Activated CD4-positive, alpha-beta T cell treated with anti-CD3 and anti-CD28 coated beads for 36 hours (primary cell): ENCODE measurements at regions of chr9 and their contacts with region 1.

Region 1: DNA sequence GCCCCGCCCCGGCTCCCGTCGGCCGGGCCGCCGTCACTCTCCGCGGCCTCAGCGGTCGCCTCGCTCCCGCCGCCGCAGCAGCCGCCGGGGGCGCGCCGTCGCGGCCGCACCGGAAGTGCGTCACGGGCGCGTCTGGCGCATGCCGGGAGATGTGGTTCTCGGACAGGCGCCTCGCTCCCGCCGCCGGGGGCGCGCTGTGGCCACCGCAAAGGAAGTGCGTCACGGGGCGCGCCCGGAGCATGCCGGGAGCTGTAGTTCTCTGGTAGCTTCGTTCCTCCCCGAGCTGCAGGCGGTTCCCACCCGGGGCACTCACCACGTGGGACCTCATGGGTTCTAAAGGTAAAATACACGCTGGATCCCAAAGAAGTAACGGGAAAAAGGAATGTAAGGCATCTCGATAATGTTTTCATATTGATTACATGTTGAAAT is at the start of gene UBAC1:
- DNase-seq: peak; percentile 98
- ATAC-seq: peak; percentile 92
- H3K4me3 Mint-ChIP-seq: peak within 1 kb of the TSS; percentile 87
- H3K27ac Mint-ChIP-seq: peak within 1 kb of the TSS; percentile 73
- H3K4me1 Mint-ChIP-seq: peaks cover 32% of the 10 kb centered on the region
- H3K27me3 Mint-ChIP-seq: no peaks in the 10 kb centered on the region
- total RNA-seq, gene UBAC1: 41.7 to 42.8 TPM

Region 2: DNA sequence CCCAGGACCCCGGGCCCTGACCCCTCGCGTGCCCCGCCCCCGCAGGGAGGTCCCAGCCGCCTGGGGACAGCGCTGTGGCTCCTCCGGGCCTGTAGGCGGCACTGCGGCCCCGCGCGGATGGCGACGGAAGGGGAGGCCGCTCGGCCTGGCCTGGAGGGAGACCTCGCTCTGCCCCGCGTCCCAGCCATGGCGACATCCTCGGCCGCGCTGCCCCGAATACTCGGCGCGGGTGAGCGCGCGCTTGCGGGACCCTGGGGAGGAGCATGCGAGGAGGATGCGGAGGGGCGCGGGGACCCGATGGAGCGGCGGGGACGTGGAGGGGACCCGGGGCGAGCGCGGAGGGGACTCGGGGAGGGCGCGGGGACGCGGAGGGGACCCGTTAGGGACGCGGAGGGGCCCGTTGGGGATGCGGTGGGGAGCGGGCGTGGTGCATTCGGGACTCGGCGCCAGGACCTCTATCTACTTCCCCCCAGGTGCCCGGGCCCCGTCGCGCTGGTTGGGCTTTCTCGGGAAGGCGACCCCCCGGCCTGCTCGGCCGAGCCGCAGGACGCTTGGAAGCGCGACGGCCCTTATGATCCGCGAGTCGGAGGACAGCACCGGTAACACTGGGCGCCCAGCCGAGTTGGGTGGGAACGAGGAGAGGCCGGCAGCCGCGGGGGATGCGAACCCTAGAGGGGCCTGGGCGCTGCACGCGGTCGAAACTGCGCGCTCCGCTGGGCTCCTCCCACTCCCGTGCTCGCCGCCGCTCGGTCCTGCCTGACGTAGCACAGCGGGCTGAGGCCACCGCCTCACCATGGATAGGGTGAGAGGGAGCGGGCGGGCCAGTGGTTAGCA is 460.5 kb before region 1 on chr9 and contains the start of gene MRPS2:
- CTCF ChIA-PET with region 1: no interaction called
- POLR2A ChIA-PET with region 1: no interaction called
- intact Hi-C with region 1: loop called in 1 of 2 experiments (anchors 2 kb)
- DNase-seq: peak; percentile 91
- ATAC-seq: peak; percentile 93
- H3K4me3 Mint-ChIP-seq: peak within 1 kb of the TSS; percentile 85
- H3K27ac Mint-ChIP-seq: peak within 1 kb of the TSS; percentile 91
- H3K4me1 Mint-ChIP-seq: peaks cover 19% of the 10 kb centered on the region
- H3K27me3 Mint-ChIP-seq: no peaks in the 10 kb centered on the region
- total RNA-seq, gene MRPS2: 50.0 to 70.6 TPM

Region 3: DNA sequence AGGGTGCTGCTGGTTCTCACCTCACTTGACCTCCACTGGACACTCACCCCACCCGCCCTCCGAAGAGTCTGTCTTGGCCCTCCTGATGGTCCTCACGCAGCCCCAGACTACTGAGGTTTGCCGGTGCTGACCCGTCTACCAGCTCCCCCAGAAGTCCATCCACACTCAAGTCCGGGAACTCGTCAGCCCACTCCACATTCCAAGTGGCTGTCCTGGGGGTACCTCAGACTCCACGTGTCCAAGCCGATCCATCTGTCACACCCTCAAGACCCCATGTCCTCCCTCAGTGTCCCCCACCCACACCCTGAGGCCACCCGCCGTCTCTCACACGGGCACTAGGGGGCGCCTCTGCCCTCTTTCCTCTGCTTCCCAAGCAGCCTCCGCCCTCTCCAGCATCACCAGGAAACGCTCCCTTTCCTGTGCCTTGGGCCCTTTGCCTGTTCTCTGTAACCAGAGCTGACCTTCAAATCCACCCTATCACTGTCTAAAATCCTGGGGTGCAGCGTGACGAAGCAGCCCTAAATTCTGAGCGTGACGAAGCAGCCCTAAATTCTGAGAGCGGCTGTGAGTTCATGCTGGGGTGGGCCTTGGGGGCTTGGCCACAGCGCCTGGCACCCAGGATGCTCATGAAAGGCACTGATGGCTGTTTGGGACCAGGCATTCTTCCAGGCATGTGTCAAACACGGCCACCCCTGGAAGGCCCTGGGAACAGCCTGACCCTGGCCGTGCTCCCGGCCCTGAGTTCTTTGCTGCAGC is 163.6 kb before region 1 on chr9:
- CTCF ChIA-PET with region 1: no interaction called
- POLR2A ChIA-PET with region 1: no interaction called
- intact Hi-C with region 1: loop called in 1 of 2 experiments (anchors 5 kb)
- DNase-seq: peak; percentile 57
- ATAC-seq: no peak
- H3K4me3 Mint-ChIP-seq: no peak overlapping the region
- H3K27ac Mint-ChIP-seq: no peak overlapping the region
- H3K4me1 Mint-ChIP-seq: no peaks in the 10 kb centered on the region
- H3K27me3 Mint-ChIP-seq: no peaks in the 10 kb centered on the region

Region 4: DNA sequence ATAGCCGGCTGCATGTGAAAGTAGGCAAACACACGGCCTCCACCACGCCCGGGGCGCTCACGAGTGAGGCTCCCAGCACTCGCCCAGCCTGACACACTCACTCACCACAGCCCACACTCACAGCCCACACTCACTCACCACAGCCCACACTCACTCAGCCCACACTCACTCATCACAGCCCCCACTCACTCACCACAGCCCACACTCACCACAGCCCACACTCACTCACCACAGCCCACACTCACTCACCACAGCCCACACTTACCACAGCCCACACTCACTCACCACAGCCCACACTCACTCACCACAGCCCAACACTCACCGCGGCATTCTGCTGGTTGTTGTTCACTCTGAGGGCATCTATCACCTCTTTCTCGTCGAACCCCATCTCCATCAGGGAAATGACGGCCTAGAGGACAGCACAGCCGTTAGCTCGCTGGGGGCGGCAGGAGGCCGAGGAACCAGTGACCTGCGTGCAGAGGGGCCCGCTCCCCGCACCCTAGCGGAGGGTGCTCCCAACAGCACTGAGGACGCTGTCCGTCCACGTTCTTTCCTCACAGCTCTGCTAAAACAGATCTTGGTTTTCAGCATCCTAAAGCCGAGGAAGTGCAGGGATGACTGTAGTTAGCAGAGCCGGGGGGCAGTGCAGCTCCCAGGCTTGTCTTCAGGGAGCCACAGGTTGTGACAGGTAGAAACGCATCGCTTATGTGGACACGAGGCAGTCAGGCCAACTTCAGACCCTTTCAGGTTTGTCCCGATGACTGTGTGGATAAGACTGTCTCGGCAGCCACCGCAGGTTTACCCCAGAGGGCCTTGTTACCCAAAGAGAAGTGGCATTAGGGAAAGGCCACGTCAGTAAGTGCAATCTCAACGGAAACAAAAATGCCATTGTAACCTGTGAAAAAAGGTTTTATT is 21.7 kb before region 1 on chr9:
- CTCF ChIA-PET with region 1: no interaction called
- POLR2A ChIA-PET with region 1: no interaction called
- intact Hi-C with region 1: loop called in 1 of 2 experiments (anchors 1 kb)
- DNase-seq: peak; percentile 71
- ATAC-seq: peak; percentile 69
- H3K4me3 Mint-ChIP-seq: peak overlapping the region; percentile 71
- H3K27ac Mint-ChIP-seq: peak overlapping the region; percentile 84
- H3K4me1 Mint-ChIP-seq: peaks cover 8% of the 10 kb centered on the region
- H3K27me3 Mint-ChIP-seq: no peaks in the 10 kb centered on the region

Region 5: GRCh38 chr9:136118320-136119060 is 157.2 kb after region 1 on chr9 and contains the start of gene TMEM250:
- CTCF ChIA-PET with region 1: interaction called, 3 read pairs
- POLR2A ChIA-PET with region 1: no interaction called
- intact Hi-C with region 1: loop called (anchors 1 kb)
- DNase-seq: peak; percentile 98
- ATAC-seq: peak; percentile 92
- H3K4me3 Mint-ChIP-seq: peak within 1 kb of the TSS; percentile 77
- H3K27ac Mint-ChIP-seq: peak within 1 kb of the TSS; percentile 83
- H3K4me1 Mint-ChIP-seq: peaks cover 21% of the 10 kb centered on the region
- H3K27me3 Mint-ChIP-seq: no peaks in the 10 kb centered on the region
- total RNA-seq, gene TMEM250: 25.4 to 28.8 TPM

Region 6: DNA sequence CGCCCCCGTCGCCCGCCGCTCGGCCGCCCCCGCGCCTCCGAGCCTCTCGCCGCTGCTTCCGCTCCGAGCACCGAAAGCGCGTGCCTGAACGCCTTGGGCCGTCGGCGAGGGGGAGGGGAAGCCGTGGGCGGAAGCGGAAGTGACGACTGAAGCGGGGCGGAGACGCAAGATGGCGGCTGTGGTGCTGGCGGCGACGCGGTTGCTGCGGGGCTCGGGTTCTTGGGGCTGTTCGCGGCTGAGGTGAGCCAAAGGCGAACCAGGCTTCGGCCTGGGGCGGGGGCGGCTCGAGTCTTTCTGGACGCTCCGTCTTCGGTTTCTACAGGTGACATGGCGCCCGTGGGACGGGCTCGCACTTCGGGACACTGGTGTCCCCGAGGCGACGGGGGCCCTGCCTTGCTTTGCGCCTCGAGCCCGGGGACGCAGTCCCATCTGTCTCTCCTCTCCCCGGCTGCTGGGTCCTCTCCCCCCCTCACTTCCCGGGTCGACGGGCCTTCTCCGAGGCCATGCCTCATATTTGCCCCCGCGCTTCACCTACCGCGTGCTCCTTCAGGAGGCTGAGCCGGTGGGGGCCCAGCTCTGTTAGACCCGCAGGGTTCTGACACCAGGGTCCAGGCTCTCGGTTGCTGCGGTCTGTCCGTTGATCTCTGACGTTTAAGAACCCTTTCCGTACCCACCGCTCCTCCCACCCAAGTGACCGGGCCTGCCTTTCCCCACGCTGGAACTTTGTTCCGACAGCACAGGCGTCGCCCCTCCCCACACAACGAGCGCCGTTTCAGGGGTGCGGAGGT is 449.4 kb after region 1 on chr9 and contains the starts of genes ENTR1 and PMPCA:
- CTCF ChIA-PET with region 1: no interaction called
- POLR2A ChIA-PET with region 1: no interaction called
- intact Hi-C with region 1: loop called in 1 of 2 experiments (anchors 1 kb)
- DNase-seq: peak; percentile 98
- ATAC-seq: peak; percentile 75
- H3K4me3 Mint-ChIP-seq: peak within 1 kb of the TSS; percentile 90
- H3K27ac Mint-ChIP-seq: peak within 1 kb of the TSS; percentile 94
- H3K4me1 Mint-ChIP-seq: peaks cover 49% of the 10 kb centered on the region
- H3K27me3 Mint-ChIP-seq: no peaks in the 10 kb centered on the region
- total RNA-seq, gene ENTR1: 57.2 to 67.7 TPM
- total RNA-seq, gene PMPCA: 88.0 to 113 TPM